Sigmoid colon (tissue), 7 donors: ENCODE measurements at regions of chr16 and their contacts with region 1.

Region 1: GRCh38 chr16:29112755-29113347 is 128.0 kb downstream of the LAT start:
- DNase-seq: no peak
- H3K4me3 ChIP-seq: no peak overlapping the region
- H3K27ac ChIP-seq: no peak overlapping the region
- H3K4me1 ChIP-seq: peaks cover 0 to 17% (median 13%) of the 10 kb centered on the region in 4 donors
- H3K27me3 ChIP-seq: no peaks in the 10 kb centered on the region
- CTCF ChIP-seq: no peak
- EP300 ChIP-seq: no peak
- POLR2A ChIP-seq: no peak

Region 2: DNA sequence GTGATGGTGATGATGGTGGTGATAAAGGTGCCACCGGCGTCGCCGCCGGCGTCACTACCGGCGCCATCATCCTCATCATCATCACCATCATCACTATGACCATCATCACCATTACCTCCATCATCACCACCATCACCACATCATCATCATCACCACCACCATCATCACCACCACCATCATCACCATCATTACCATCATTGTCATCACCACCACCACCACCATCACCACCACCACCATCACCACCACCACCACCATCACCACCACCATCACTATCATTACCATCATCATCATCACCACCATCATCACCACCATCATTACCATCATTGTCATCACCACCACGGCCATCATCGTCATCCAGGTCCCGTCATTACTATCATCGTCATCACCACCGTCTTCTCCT is 113.9 kb after region 1 on chr16:
- intact Hi-C with region 1: loop called (anchors 10 kb)
- DNase-seq: no peak
- H3K4me3 ChIP-seq: no peak overlapping the region
- H3K27ac ChIP-seq: no peak overlapping the region
- H3K4me1 ChIP-seq: peaks cover 0 to 16% (median 9%) of the 10 kb centered on the region in 4 donors
- H3K27me3 ChIP-seq: no peaks in the 10 kb centered on the region
- CTCF ChIP-seq: no peak
- EP300 ChIP-seq: no peak
- POLR2A ChIP-seq: no peak